Mammary epithelial cell (primary cell): ENCODE measurements at regions of chr4 and their contacts with region 1.

Region 1: DNA sequence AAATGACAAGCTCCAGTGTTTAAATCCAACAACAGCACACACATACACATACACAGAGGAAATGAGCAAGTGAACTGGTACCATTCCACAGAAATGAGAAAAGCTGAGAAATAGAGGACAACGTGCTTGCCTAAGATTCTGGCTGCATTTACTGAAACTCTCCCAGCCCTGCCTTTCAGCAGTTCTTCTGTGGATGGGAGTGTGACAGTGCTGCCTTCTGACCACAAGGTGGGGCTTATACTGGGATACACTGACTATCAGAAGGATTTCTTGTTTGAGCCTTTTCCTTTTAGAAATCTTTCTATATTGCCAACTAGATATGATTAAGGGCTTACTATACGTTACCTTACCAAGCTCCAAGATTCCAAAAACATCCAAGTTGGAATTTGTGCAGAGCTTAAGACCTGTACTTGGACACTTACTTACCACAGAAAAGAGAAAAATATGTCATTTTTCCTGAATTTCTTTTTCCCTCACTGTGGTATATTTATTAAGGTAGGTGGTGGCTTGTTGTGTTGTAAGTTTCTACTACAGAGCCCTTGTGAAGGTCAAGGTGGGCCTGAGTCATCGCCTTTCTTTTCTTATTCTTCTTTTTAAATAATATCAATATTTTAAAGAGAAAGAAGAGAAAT is 10.7 kb upstream of the CXCL8 start:
- DNase-seq: peak; percentile 84
- H3K4me3 ChIP-seq: no peak overlapping the region
- H3K27ac ChIP-seq: no peak overlapping the region
- H3K4me1 ChIP-seq: peaks cover 35% of the 10 kb centered on the region
- H3K27me3 ChIP-seq: no peaks in the 10 kb centered on the region
- CTCF ChIP-seq: peak; percentile 88 to 96

Region 2: GRCh38 chr4:73258686-73259570 is 470.7 kb before region 1 on chr4 and contains the start of gene ANKRD17:
- CTCF ChIA-PET with region 1: no interaction called
- dilution Hi-C with region 1: no loop called
- in situ Hi-C with region 1: no loop called
- intact Hi-C with region 1: no loop called
- DNase-seq: peak; percentile 94
- H3K4me3 ChIP-seq: peak within 1 kb of the TSS; percentile 70 to 97 (median 96)
- H3K27ac ChIP-seq: peak within 1 kb of the TSS; percentile 97
- H3K4me1 ChIP-seq: peaks cover 12% of the 10 kb centered on the region
- H3K27me3 ChIP-seq: no peaks in the 10 kb centered on the region
- CTCF ChIP-seq: peak in 1 of 2 donors; percentile 22
- total RNA-seq, gene ANKRD17: 66.2 to 70.6 TPM

Region 3: GRCh38 chr4:73593631-73594241 is 135.9 kb before region 1 on chr4:
- CTCF ChIA-PET with region 1: no interaction called
- dilution Hi-C with region 1: no loop called
- in situ Hi-C with region 1: no loop called
- intact Hi-C with region 1: no loop called
- DNase-seq: no peak
- H3K4me3 ChIP-seq: no peak overlapping the region
- H3K27ac ChIP-seq: no peak overlapping the region
- H3K4me1 ChIP-seq: peaks cover 26% of the 10 kb centered on the region
- H3K27me3 ChIP-seq: no peaks in the 10 kb centered on the region
- CTCF ChIP-seq: peak; percentile 51 to 62

Region 4: GRCh38 chr4:73662709-73663546 is 66.7 kb before region 1 on chr4:
- CTCF ChIA-PET with region 1: no interaction called
- dilution Hi-C with region 1: no loop called
- in situ Hi-C with region 1: no loop called
- intact Hi-C with region 1: loop called (anchors 1 kb)
- DNase-seq: peak; percentile 64
- H3K4me3 ChIP-seq: no peak overlapping the region
- H3K27ac ChIP-seq: peak overlapping the region; percentile 74
- H3K4me1 ChIP-seq: peaks cover 19% of the 10 kb centered on the region
- H3K27me3 ChIP-seq: no peaks in the 10 kb centered on the region
- CTCF ChIP-seq: peak; percentile 48 to 59

Region 5: DNA sequence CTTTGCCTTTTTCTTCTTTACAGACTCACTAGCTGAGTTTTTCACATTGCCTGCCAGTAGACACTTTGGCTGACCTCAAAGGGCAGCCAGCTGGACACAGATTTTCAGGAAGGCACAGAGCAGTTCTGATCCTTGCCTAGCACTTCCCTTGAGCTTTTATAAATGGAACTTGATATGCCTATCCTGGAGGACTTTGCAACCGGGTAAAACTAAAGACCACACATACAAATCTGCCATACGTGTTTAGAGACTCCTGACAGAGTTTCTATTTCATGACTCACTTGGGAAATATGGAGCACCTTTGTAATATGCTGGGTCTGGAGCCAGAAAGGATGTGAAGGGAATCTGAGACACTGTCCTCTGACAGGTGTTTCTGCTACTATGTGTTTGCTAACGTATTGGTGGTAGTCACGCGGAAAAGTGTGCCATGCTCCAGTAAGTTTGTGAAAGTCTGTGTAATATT is 52.8 kb before region 1 on chr4:
- CTCF ChIA-PET with region 1: no interaction called
- dilution Hi-C with region 1: no loop called
- in situ Hi-C with region 1: no loop called
- intact Hi-C with region 1: loop called (anchors 2 kb)
- DNase-seq: peak; percentile 99
- H3K4me3 ChIP-seq: no peak overlapping the region
- H3K27ac ChIP-seq: peak overlapping the region; percentile 90
- H3K4me1 ChIP-seq: peaks cover 43% of the 10 kb centered on the region
- H3K27me3 ChIP-seq: no peaks in the 10 kb centered on the region
- CTCF ChIP-seq: no peak

Region 6: DNA sequence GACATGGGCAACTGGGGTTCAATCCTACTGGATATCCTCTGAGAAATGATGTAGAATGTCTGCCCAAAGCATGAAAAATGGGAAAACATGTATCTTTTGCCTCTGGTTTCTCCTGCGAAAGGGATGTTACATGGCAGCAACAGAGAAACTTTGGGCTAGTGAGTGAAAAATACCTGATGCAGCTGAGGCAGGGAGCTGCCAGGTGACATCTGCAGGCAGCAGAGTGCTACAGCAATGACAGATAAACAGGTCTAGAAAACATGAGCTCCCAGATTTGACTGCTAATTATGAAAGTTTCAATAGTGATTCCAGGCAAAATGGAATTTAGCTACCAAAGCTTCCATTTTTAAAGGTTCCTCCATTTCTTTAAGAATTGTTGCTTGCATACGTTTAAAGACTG is 134.7 kb after region 1 on chr4:
- CTCF ChIA-PET with region 1: no interaction called
- dilution Hi-C with region 1: no loop called
- in situ Hi-C with region 1: loop called in 1 of 2 experiments (anchors 25 kb)
- intact Hi-C with region 1: loop called (anchors 1 kb)
- DNase-seq: peak; percentile 59
- H3K4me3 ChIP-seq: no peak overlapping the region
- H3K27ac ChIP-seq: no peak overlapping the region
- H3K4me1 ChIP-seq: peaks cover 25% of the 10 kb centered on the region
- H3K27me3 ChIP-seq: no peaks in the 10 kb centered on the region
- CTCF ChIP-seq: peak; percentile 79 to 91

Region 7: DNA sequence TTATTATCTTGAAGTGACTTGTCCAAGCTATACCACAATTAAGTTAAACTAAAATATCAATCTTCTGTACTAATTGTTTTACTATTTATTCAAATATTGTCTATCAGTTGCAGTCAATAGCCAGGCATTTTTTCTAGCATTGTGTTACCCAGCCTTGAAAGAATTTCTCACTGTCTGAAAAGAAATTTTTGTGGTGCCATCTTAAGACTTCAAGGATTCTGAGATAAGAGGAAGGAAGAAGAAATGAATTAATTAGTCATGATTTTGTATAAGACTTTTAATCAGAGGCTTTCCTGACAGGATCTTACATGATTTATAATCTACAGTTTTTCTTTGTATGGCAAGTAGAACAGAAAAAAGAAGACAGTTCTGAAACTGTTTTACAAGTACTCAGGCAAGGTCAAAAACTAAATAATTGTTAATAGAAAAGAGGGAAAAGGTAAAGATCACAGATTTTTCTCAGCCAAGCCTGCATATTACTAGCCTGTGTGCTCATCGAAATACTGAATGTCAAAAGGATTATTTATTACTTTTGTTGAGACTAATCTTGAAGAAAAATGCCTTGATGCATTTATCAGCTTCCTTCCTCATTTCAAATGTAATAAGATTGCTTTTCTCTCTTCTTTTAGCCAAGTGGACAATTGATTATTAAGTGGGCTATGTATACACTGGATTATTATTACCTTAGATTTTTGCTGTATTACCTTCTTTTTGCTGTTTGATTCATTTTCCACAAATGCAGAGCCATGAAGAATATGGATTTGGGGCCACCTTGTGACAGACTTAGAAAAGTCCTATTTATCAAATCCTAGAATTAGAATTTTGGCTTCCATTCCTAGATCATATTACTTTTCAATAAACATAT is 193.3 kb after region 1 on chr4:
- CTCF ChIA-PET with region 1: no interaction called
- dilution Hi-C with region 1: no loop called
- in situ Hi-C with region 1: no loop called
- intact Hi-C with region 1: loop called (anchors 1 kb)
- DNase-seq: peak; percentile 33
- H3K4me3 ChIP-seq: no peak overlapping the region
- H3K27ac ChIP-seq: peak overlapping the region; percentile 3
- H3K4me1 ChIP-seq: peaks cover 10% of the 10 kb centered on the region
- H3K27me3 ChIP-seq: no peaks in the 10 kb centered on the region
- CTCF ChIP-seq: peak; percentile 35 to 53

Region 8: DNA sequence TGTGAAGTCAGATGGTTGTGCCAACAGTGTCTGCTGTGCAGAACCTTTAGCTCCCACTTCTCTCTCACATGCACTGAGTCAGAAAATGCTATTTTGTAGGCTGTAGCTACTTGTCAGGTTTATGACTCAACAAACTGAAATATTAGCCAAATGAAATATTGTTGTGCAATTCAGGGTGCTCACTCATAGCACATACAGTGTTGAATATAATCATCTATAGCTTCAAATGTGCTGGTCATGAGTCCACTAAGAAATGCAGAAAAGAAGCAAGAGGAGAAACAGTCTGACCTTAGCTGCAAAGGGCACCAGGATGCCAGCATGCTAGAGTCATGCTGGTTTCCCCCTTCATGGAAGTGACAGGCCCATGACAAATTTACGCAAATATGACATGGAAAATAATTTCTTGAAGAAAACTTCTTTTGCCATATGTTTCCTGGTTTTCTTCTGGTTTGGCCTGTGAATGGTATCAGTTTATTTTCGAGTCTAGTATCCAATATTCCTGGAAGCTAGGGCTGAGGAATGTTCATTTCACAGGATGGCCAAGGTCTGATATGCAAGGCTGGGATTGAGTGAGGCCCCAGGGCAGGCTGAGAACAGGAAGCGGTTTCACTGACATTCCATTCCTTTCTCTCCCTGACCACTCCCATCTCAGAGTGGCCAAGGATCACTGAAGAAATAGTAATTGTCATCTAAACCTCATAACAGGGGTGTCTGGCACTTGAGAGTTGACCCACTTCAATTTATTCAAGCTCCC is 379.6 kb after region 1 on chr4:
- CTCF ChIA-PET with region 1: no interaction called
- dilution Hi-C with region 1: no loop called
- in situ Hi-C with region 1: no loop called
- intact Hi-C with region 1: loop called (anchors 5 kb)
- DNase-seq: peak; percentile 98
- H3K4me3 ChIP-seq: peak overlapping the region in 2 of 3 experiments; percentile 5 to 15
- H3K27ac ChIP-seq: peak overlapping the region; percentile 99
- H3K4me1 ChIP-seq: peaks cover 65% of the 10 kb centered on the region
- H3K27me3 ChIP-seq: no peaks in the 10 kb centered on the region
- CTCF ChIP-seq: no peak